Activated CD4-positive, alpha-beta memory T cell treated with anti-CD3 and anti-CD28 coated beads for 36 hours (primary cell): ENCODE measurements at regions of chr7 and their contacts with region 1.

Region 1: DNA sequence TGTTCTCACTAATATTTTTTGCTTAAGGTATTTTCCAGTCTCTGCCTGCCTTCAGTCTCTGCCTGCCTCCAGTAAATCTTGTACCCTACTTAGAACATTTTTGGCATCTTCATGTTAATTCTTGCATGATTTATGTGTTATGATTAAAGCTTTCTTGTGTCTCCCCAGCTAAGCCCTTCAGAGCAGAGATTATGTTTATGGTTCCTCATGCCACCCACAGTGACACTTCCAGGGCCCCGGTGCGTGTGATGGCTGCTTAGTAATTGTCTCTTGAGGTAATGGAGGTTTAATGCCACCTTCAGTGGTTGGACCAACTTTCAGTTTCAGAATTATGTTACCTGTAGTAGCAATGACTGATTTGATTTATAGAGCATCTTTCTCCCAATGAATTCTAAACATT is 70.6 kb upstream of the MET start:
- DNase-seq: peak; percentile 61
- H3K4me3 Mint-ChIP-seq: no peak overlapping the region
- H3K27ac Mint-ChIP-seq: no peak overlapping the region
- H3K4me1 Mint-ChIP-seq: peaks cover 9% of the 10 kb centered on the region
- H3K27me3 Mint-ChIP-seq: peaks cover 6% of the 10 kb centered on the region

Region 2: DNA sequence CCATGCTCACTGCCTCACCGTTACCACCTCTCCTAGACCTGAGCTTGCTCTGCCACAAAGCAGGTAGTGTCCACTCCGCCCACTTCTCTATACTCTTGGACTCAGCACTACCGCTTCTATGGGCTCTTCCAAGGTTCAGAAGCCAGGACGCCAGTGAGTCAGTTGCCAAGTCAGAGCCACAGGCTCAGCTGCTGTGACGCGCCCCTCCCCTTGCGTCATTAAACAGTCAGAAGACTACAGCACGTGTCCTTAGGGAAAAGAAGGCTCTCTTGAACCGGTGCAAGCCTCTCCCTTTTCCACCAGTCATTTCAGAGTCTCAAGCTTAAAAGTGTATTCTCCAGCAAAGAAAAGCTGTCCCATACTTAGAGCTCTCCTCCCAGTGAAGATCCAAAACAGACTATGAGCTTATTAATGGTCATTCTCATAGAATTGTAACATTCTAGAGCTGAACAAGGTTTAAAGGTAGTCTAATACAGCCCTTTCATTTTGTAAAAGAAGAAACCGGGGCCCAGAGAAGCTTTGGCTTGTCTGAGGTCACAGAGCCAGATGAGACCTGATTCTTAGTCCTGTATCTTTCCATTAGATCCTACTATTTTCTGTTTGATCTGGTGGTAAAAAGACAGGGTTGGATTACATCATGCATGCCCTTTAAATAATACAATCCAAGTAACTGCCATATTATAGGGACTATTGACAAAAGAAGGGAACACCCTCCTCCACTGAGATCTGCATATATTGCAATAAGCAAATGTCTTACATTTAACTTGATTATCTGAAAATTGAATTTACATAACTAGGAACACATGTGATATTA is 29.7 kb after region 1 on chr7:
- CTCF ChIA-PET with region 1: no interaction called
- POLR2A ChIA-PET with region 1: no interaction called
- intact Hi-C with region 1: loop called (anchors 2 kb)
- DNase-seq: no peak
- H3K4me3 Mint-ChIP-seq: no peak overlapping the region
- H3K27ac Mint-ChIP-seq: no peak overlapping the region
- H3K4me1 Mint-ChIP-seq: peaks cover 6% of the 10 kb centered on the region
- H3K27me3 Mint-ChIP-seq: peaks cover 5% of the 10 kb centered on the region